Sigmoid colon (tissue), 7 donors: ENCODE measurements at regions of chr2 and their contacts with region 1.

Region 1: GRCh38 chr2:60998628-60999545 is 18.6 kb upstream of the PEX13 start:
- DNase-seq: no peak
- H3K4me3 ChIP-seq: no peak overlapping the region
- H3K27ac ChIP-seq: no peak overlapping the region
- H3K4me1 ChIP-seq: no peaks in the 10 kb centered on the region
- H3K27me3 ChIP-seq: no peaks in the 10 kb centered on the region
- CTCF ChIP-seq: peak; percentile 20 to 65 (median 30)
- EP300 ChIP-seq: no peak
- POLR2A ChIP-seq: no peak

Region 2: DNA sequence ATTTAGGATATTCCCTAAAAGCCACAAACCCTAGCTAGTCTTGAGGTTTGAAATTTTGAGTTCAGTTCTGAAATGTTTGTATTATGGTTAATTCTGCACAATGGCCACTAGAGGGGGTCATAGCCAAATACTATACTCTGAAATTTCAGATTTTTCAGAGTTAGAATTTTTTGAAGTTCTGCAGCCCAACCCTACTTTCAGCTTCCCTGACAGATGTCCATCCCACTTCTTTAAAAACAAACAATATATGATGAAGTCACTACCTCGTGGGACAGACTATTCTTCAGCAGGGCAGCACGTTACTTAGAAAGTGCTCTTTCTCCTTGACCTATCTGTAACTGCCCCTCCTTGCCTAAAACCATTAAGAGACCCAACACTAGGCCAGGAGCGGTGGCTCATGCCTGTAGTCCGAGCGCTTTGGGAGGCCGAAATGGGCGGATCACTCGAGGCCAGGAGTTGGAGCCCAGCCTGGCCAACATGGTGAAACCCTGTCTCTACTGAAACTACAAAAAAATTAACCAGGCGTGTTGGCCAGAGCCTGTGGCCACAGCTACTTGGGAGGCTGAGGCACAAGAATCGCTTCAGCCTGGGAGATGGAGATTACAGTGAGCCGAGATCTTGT is 291.0 kb before region 1 on chr2:
- intact Hi-C with region 1: loop called (anchors 1 kb)
- DNase-seq: no peak
- H3K4me3 ChIP-seq: no peak overlapping the region
- H3K27ac ChIP-seq: no peak overlapping the region
- H3K4me1 ChIP-seq: no peaks in the 10 kb centered on the region
- H3K27me3 ChIP-seq: no peaks in the 10 kb centered on the region
- CTCF ChIP-seq: peak; percentile 37 to 70 (median 51)
- EP300 ChIP-seq: no peak
- POLR2A ChIP-seq: no peak

Region 3: DNA sequence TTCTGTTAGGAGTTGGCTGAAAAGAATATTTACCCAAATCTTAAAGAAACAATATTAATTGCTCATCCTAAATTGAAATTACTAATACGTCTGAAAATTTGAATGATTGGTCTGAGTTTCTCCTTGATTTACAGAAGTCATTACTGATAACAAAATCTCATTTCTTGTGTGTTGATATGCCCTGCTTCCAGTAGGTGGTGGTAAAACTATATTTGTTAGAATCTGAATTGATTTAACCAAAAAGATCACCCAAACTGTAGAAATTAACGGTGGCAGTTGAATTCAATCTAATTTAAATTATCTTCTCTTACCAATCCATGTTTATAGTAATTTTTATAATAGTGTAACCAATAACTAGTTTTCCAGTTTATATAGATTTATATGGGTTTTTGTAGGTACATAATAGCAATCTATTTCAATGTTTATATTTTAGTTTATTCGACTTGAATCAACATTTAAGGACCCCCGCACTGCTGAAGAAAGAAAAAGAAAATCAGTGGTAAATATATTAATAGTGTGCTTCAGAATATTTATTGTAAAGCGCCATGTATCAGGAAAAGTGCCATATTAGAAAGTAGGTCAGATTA is 204.5 kb before region 1 on chr2:
- intact Hi-C with region 1: loop called (anchors 10 kb)
- DNase-seq: no peak
- H3K4me3 ChIP-seq: no peak overlapping the region
- H3K27ac ChIP-seq: no peak overlapping the region
- H3K4me1 ChIP-seq: no peaks in the 10 kb centered on the region
- H3K27me3 ChIP-seq: no peaks in the 10 kb centered on the region
- CTCF ChIP-seq: peak in 1 of 4 experiments; percentile 15
- EP300 ChIP-seq: no peak
- POLR2A ChIP-seq: no peak